PC-3 (cell line): ENCODE measurements at regions of chr5 and their contacts with region 1.

Region 1: DNA sequence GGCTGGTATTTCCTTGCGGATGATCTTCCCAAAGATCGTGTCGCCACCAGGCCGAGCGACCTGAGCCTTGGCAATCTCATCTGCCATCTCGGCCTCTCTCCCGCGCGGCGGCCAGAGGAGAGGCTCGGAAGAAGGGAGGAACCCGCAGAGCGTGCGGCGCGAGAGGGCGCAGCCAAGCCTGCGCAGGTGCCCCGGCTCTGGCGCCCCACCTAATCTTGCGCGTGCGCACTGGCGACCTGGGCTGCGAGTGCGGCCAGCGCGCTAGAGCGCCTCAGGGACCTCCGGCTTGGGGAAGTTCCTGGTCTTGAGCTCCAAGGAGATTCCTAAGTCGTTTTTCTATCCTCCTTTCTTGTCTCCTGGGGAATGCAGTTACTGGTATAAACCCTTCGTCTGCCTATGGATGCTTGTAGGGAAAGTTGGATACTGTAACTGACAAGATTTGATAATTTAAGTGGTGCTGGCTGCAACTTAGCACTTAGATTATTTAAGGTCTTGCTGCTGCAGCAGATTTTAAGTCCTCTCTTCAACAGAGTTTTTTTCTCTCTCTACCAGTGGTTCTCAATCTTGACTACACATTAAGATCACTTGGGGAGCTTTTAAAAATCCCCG is at the start of gene HINT1:
- DNase-seq: peak; percentile 92
- ATAC-seq: peak; percentile 90
- H3K4me3 ChIP-seq: peak within 1 kb of the TSS; percentile 98
- H3K27ac ChIP-seq: peak within 1 kb of the TSS; percentile 65
- H3K4me1 ChIP-seq: peaks cover 16% of the 10 kb centered on the region; the same call in 1 of the 2 replicates
- H3K27me3 ChIP-seq: no peaks in the 10 kb centered on the region
- CTCF ChIP-seq: 0 out of 2 replicates have a peak, but pooled peaks have one; percentile 22
- total RNA-seq, gene HINT1: 214 and 243 TPM in 2 replicates

Region 2: GRCh38 chr5:130168211-130168610 is 997.0 kb before region 1 on chr5:
- CTCF ChIA-PET with region 1: no interaction called
- POLR2A ChIA-PET with region 1: no interaction called
- intact Hi-C with region 1: no loop called
- DNase-seq: peak; percentile 74
- ATAC-seq: peak; percentile 94
- H3K4me3 ChIP-seq: no peak overlapping the region
- H3K27ac ChIP-seq: peak overlapping the region; percentile 58
- H3K4me1 ChIP-seq: peaks cover 19% of the 10 kb centered on the region
- H3K27me3 ChIP-seq: no peaks in the 10 kb centered on the region
- CTCF ChIP-seq: no peak

Region 3: DNA sequence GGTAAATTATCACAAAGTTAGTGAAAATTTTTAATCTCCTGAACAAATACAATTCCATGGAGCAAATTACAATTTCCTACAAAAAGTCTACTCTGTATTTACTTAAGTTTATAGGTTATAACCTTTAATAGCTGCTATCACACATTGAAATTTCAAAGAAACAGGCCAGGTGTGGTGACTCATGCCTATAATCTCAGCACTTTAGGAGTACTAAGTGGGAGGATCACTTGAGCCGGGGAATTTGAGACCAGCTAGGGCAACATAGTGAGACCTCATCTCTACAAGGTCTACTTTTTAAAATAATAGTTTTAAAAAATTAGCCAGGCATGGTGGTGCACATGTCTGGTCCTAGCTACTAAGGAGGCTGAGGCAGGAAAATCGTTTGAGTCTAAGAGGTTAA is 50.5 kb before region 1 on chr5:
- CTCF ChIA-PET with region 1: no interaction called
- POLR2A ChIA-PET with region 1: no interaction called
- intact Hi-C with region 1: no loop called
- DNase-seq: peak; percentile 31
- ATAC-seq: peak; percentile 55; the same call in 1 of the 2 replicates
- H3K4me3 ChIP-seq: no peak overlapping the region
- H3K27ac ChIP-seq: no peak overlapping the region
- H3K4me1 ChIP-seq: no peaks in the 10 kb centered on the region
- H3K27me3 ChIP-seq: no peaks in the 10 kb centered on the region
- CTCF ChIP-seq: no peak

Region 4: GRCh38 chr5:131129306-131129705 is 35.9 kb before region 1 on chr5:
- CTCF ChIA-PET with region 1: no interaction called
- POLR2A ChIA-PET with region 1: no interaction called
- intact Hi-C with region 1: no loop called
- DNase-seq: no peak
- ATAC-seq: no peak
- H3K4me3 ChIP-seq: no peak overlapping the region
- H3K27ac ChIP-seq: no peak overlapping the region
- H3K4me1 ChIP-seq: no peaks in the 10 kb centered on the region
- H3K27me3 ChIP-seq: no peaks in the 10 kb centered on the region
- CTCF ChIP-seq: no peak

Region 5: DNA sequence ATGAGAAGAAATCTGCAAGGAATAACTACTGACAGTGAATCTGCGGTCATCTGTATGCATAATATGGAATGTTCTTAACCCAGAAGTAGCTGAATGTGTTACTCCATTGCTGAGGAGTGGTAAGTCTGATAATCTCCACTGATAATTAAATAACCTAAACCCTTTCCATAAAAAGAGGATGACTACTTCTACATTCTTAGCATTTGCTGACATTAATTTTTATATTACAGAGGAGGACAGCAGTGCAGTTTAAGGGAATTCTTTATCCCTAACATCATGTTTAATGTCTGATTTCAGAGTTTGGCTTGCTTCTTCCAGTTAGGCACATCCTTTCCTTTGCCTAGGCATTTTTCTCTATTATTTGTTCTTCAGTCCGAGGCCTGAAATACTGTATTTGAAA is 150.8 kb after region 1 on chr5:
- CTCF ChIA-PET with region 1: no interaction called
- POLR2A ChIA-PET with region 1: no interaction called
- intact Hi-C with region 1: no loop called
- DNase-seq: no peak
- ATAC-seq: no peak
- H3K4me3 ChIP-seq: no peak overlapping the region
- H3K27ac ChIP-seq: no peak overlapping the region
- H3K4me1 ChIP-seq: no peaks in the 10 kb centered on the region
- H3K27me3 ChIP-seq: no peaks in the 10 kb centered on the region
- CTCF ChIP-seq: no peak

Region 6: GRCh38 chr5:131328536-131329285 is 163.5 kb after region 1 on chr5:
- CTCF ChIA-PET with region 1: no interaction called
- POLR2A ChIA-PET with region 1: no interaction called
- intact Hi-C with region 1: loop called (anchors 5 kb)
- DNase-seq: peak; percentile 84
- ATAC-seq: peak; percentile 99
- H3K4me3 ChIP-seq: no peak overlapping the region
- H3K27ac ChIP-seq: peak overlapping the region; percentile 28; the same call in 1 of the 2 replicates
- H3K4me1 ChIP-seq: peaks cover 17% of the 10 kb centered on the region
- H3K27me3 ChIP-seq: no peaks in the 10 kb centered on the region
- CTCF ChIP-seq: no peak

Region 7: GRCh38 chr5:131382407-131383395 is 217.5 kb after region 1 on chr5:
- CTCF ChIA-PET with region 1: interaction called, 3 read pairs
- POLR2A ChIA-PET with region 1: no interaction called
- intact Hi-C with region 1: loop called (anchors 10 kb)
- DNase-seq: peak; percentile 61
- ATAC-seq: peak; percentile 54
- H3K4me3 ChIP-seq: no peak overlapping the region
- H3K27ac ChIP-seq: no peak overlapping the region
- H3K4me1 ChIP-seq: peaks cover 25% of the 10 kb centered on the region
- H3K27me3 ChIP-seq: no peaks in the 10 kb centered on the region
- CTCF ChIP-seq: peak; percentile 72

Region 8: GRCh38 chr5:131417240-131417869 is 252.1 kb after region 1 on chr5:
- CTCF ChIA-PET with region 1: no interaction called
- POLR2A ChIA-PET with region 1: no interaction called
- intact Hi-C with region 1: loop called (anchors 1 kb)
- DNase-seq: peak; percentile 73
- ATAC-seq: peak; percentile 40
- H3K4me3 ChIP-seq: no peak overlapping the region
- H3K27ac ChIP-seq: no peak overlapping the region
- H3K4me1 ChIP-seq: no peaks in the 10 kb centered on the region
- H3K27me3 ChIP-seq: no peaks in the 10 kb centered on the region
- CTCF ChIP-seq: peak; percentile 81